Mammary epithelial cell (primary cell): ENCODE measurements at regions of chr12 and their contacts with region 1.

Region 1: GRCh38 chr12:92145731-92146496 is at the start of gene BTG1:
- DNase-seq: peak; percentile 100
- H3K4me3 ChIP-seq: peak within 1 kb of the TSS; percentile 83 to 100 (median 88)
- H3K27ac ChIP-seq: peak within 1 kb of the TSS; percentile 92
- H3K4me1 ChIP-seq: peaks cover 8% of the 10 kb centered on the region
- H3K27me3 ChIP-seq: no peaks in the 10 kb centered on the region
- CTCF ChIP-seq: no peak
- total RNA-seq, gene BTG1: 26.8 to 68.2 TPM

Region 2: GRCh38 chr12:91577586-91578539 is 568.1 kb before region 1 on chr12:
- CTCF ChIA-PET with region 1: interaction called, 5 read pairs
- dilution Hi-C with region 1: no loop called
- in situ Hi-C with region 1: no loop called
- intact Hi-C with region 1: loop called (anchors 2 kb)
- DNase-seq: peak; percentile 37
- H3K4me3 ChIP-seq: peak overlapping the region in 2 of 3 experiments; percentile 38 to 46
- H3K27ac ChIP-seq: no peak overlapping the region
- H3K4me1 ChIP-seq: no peaks in the 10 kb centered on the region
- H3K27me3 ChIP-seq: no peaks in the 10 kb centered on the region
- CTCF ChIP-seq: peak; percentile 56 to 58

Region 3: DNA sequence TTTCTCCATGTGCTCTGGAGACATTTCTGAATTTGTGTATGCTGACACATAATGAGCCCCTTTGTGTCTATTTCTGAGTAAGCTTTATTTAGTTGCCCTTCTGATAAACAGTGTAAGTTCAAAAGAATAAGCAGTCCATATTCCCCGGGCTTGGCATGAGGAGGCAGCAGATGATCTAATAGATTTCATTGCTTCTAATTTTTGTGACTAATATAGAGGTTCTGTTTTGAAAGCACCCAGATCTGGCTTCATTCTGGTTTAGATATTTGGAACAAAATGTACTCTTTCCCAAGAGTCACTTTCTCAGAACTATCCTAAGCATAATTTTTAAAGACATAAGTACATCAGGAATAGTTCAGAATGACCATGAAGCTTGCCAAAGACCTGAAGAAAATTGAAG is 291.2 kb before region 1 on chr12:
- CTCF ChIA-PET with region 1: no interaction called
- dilution Hi-C with region 1: no loop called
- in situ Hi-C with region 1: no loop called
- intact Hi-C with region 1: loop called (anchors 10 kb)
- DNase-seq: peak; percentile 41
- H3K4me3 ChIP-seq: no peak overlapping the region
- H3K27ac ChIP-seq: no peak overlapping the region
- H3K4me1 ChIP-seq: no peaks in the 10 kb centered on the region
- H3K27me3 ChIP-seq: no peaks in the 10 kb centered on the region
- CTCF ChIP-seq: peak in 1 of 2 donors; percentile 27

Region 4: GRCh38 chr12:92078167-92079053 is 67.5 kb before region 1 on chr12:
- CTCF ChIA-PET with region 1: no interaction called
- dilution Hi-C with region 1: no loop called
- in situ Hi-C with region 1: no loop called
- intact Hi-C with region 1: loop called (anchors 2 kb)
- DNase-seq: peak; percentile 97
- H3K4me3 ChIP-seq: no peak overlapping the region
- H3K27ac ChIP-seq: peak overlapping the region; percentile 91
- H3K4me1 ChIP-seq: peaks cover 40% of the 10 kb centered on the region
- H3K27me3 ChIP-seq: no peaks in the 10 kb centered on the region
- CTCF ChIP-seq: no peak

Region 5: DNA sequence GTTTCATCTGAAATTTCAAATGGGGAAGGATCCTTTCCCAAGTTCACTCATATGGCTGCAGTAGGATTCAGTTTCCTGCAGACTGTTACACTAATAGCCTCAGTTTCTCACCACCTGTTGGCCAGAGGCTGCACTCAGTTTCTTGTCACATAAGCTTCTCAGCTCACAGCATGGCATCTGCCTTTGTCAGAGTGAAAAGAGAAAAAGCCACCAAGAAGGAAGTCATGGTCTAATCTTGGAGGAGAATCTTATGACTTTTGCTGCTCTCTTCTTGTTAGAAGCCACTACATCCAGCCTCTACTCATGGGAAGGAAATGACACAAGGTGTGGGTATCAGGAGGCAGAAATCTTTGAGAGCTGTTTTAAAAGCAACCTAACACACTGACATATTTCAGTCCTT is 39.1 kb after region 1 on chr12:
- CTCF ChIA-PET with region 1: no interaction called
- dilution Hi-C with region 1: no loop called
- in situ Hi-C with region 1: no loop called
- intact Hi-C with region 1: no loop called
- DNase-seq: no peak
- H3K4me3 ChIP-seq: no peak overlapping the region
- H3K27ac ChIP-seq: no peak overlapping the region
- H3K4me1 ChIP-seq: no peaks in the 10 kb centered on the region
- H3K27me3 ChIP-seq: no peaks in the 10 kb centered on the region
- CTCF ChIP-seq: no peak

Region 6: DNA sequence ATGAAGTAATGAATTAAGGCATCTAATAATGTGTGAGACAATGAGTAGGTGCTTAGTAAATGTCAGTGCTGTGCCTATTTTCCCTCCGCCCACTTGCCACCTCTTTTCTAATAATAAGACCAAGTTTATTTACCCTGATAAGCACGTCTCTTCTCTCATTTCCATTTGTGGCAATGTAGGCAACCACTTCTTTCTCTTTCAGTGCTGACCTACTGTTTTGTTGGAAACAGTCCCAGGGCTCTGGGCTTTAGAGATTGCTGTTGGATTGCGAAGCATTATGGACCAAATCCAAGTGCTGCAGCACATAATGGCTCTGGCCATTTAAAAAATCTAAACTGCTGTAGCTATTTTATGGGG is 415.6 kb after region 1 on chr12:
- CTCF ChIA-PET with region 1: no interaction called
- dilution Hi-C with region 1: no loop called
- in situ Hi-C with region 1: loop called in 1 of 2 experiments (anchors 10 kb)
- intact Hi-C with region 1: no loop called
- DNase-seq: peak; percentile 39
- H3K4me3 ChIP-seq: no peak overlapping the region
- H3K27ac ChIP-seq: no peak overlapping the region
- H3K4me1 ChIP-seq: no peaks in the 10 kb centered on the region
- H3K27me3 ChIP-seq: no peaks in the 10 kb centered on the region
- CTCF ChIP-seq: no peak

Region 7: GRCh38 chr12:92649511-92650227 is 503.8 kb after region 1 on chr12:
- CTCF ChIA-PET with region 1: no interaction called
- dilution Hi-C with region 1: no loop called
- in situ Hi-C with region 1: no loop called
- intact Hi-C with region 1: loop called (anchors 2 kb)
- DNase-seq: peak; percentile 82
- H3K4me3 ChIP-seq: no peak overlapping the region
- H3K27ac ChIP-seq: no peak overlapping the region
- H3K4me1 ChIP-seq: peaks cover 16% of the 10 kb centered on the region
- H3K27me3 ChIP-seq: no peaks in the 10 kb centered on the region
- CTCF ChIP-seq: peak; percentile 62 to 84